ENCODE measurements at regions of chr9 and their contacts with region 1.

Region 1: GRCh38 chr9:122125158-122125508 is 32.0 kb upstream of the TTLL11 start:
- DNase-seq: peak; percentile 85 to 93
- ATAC-seq: peak; percentile 80
- H3K4me3 ChIP-seq: no peak overlapping the region
- H3K27ac ChIP-seq: no peak overlapping the region
- H3K4me1 ChIP-seq: no peaks in the 10 kb centered on the region
- H3K27me3 ChIP-seq: no peaks in the 10 kb centered on the region

Region 2: DNA sequence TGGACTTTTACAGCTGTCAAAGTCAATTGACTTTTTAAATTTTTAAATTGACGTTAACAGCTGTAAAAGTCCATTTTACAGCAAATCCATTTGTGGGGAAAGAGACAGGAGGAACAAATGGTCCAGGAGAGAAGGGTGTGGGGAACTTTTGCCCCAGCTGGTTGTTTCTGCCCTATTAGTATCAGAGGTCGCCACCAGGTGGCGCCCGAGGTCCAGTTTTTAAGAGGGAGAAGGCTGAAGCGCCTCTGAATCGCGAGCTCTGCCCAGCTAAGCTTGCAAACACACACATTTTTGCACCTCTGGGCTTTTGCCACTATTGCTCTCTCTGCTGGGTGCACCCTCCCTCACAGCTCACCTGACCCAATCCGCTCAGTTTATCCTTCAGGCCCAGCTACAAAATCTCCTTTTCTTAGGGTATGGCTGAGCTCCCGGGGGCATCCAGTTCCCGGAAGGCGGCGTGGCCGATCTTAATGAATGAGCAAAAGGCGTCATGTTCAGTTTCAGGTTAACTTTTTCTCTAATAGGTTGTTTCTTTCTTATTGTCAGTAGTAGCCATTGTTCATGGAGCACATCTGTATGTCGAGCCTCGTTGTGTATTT is 25.8 kb before region 1 on chr9:
- intact Hi-C with region 1: loop called (anchors 2 kb)
- DNase-seq: peak; percentile 87 to 94
- ATAC-seq: peak; percentile 87
- H3K4me3 ChIP-seq: no peak overlapping the region
- H3K27ac ChIP-seq: no peak overlapping the region
- H3K4me1 ChIP-seq: no peaks in the 10 kb centered on the region
- H3K27me3 ChIP-seq: no peaks in the 10 kb centered on the region

Region 3: DNA sequence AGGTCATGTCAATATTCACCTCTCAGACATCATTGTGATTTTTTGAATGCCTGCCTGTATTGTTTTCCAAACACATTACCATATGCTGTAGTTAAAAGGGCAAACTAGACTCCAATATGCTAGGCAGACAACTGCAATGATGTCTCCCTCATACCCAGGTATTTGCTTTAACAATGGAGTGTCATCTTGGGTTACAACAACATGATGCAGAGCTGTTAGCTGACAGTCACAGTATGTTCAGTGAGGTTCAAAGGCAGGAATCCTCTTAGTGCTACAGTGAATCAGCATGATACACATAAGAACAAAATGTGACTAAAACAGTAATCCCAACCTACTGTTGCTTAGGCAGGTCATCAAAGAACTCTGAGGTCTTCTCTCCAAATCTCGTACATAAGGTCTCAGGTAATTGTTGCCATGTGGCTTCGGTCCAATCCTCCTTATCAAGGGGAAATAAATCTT is 328.6 kb after region 1 on chr9:
- intact Hi-C with region 1: loop called (anchors 2 to 10 kb)
- DNase-seq: no peak
- ATAC-seq: no peak
- H3K4me3 ChIP-seq: no peak overlapping the region
- H3K27ac ChIP-seq: no peak overlapping the region
- H3K4me1 ChIP-seq: no peaks in the 10 kb centered on the region
- H3K27me3 ChIP-seq: peaks cover 0 to 2% of the 10 kb centered on the region in 2 donors